ENCODE measurements at regions of chr1 and their contacts with region 1.

Region 1: DNA sequence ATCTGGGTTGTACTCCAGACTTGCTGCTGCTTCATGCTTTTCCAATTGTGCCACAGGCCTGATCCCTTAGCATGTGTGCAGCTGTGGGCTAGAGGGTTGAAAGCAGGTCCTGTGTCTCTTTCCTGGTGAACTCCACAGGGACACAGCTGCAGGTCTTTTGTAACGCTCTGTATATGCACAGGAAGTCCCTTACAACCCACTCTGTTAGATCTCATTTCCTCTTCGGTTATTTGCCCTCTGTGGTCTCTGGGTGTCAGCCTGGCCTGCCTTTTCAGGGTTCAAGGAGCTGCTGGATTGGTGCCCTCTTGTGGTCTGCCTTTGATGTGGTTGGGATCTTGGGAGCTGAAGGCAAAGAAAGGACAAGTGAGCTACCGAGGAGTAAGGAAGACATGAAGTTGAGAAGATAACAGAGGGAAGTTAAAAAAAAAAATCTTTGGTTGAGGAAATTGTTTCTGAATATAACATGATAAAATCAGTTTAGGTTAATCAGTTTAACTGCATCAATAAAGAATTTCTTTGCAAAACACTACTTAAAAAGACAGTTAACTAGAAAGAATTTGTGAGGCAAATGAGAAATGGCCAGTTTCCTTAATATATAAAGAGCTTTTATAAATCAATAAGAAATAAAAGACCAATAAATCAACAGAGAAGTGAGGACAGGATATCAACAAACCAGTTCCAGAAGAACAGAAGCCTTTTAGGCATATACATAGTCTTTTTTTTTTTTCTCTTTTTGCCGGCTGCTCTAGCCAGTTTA is 44.1 kb downstream of the UCK2 start:
- DNase-seq: peak in 1 of 2 experiments; percentile 64
- H3K4me3 ChIP-seq: no peak overlapping the region
- H3K27ac ChIP-seq: no peak overlapping the region
- H3K4me1 ChIP-seq: peaks cover 0 to 11% (median 2%) of the 10 kb centered on the region in 4 experiments; a peak in 1 of 7 replicates
- H3K27me3 ChIP-seq: no peaks in the 10 kb centered on the region
- CTCF ChIP-seq: peak; percentile 57 to 75 (median 74)
- EP300 ChIP-seq: no peak
- POLR2A ChIP-seq: no peak
- RAD21 ChIP-seq: peak; percentile 50 to 62

Region 2: DNA sequence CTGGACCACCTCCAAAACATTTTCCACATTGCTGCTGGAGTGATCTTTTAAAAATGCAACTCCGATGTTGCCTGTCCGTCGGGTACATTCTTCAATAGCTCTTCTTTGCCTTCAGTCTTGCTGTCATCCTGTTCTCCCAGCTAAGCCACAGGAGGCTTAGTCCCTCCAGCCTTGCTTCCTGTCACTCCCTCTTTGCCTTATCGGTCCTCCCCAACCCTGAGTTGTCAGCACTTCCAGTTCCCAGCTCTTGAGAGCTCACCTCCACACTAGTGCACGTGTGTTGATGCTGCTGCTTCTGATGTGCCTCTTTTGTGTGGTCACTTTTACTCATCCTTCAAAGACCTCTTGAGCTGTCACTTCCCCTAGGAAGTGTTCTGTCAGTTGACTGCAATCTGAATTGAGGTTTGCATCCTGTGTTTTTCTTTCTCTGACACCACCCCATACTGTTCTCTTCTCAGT is 28.8 kb before region 1 on chr1:
- CTCF ChIA-PET with region 1: interaction called, 11 read pairs
- POLR2A ChIA-PET with region 1: no interaction called
- DNase-seq: no peak
- H3K4me3 ChIP-seq: no peak overlapping the region
- H3K27ac ChIP-seq: no peak overlapping the region
- H3K4me1 ChIP-seq: peaks cover 5 to 35% (median 16%) of the 10 kb centered on the region in 4 experiments
- H3K27me3 ChIP-seq: no peaks in the 10 kb centered on the region
- CTCF ChIP-seq: no peak
- EP300 ChIP-seq: no peak
- POLR2A ChIP-seq: no peak
- RAD21 ChIP-seq: no peak

Region 3: DNA sequence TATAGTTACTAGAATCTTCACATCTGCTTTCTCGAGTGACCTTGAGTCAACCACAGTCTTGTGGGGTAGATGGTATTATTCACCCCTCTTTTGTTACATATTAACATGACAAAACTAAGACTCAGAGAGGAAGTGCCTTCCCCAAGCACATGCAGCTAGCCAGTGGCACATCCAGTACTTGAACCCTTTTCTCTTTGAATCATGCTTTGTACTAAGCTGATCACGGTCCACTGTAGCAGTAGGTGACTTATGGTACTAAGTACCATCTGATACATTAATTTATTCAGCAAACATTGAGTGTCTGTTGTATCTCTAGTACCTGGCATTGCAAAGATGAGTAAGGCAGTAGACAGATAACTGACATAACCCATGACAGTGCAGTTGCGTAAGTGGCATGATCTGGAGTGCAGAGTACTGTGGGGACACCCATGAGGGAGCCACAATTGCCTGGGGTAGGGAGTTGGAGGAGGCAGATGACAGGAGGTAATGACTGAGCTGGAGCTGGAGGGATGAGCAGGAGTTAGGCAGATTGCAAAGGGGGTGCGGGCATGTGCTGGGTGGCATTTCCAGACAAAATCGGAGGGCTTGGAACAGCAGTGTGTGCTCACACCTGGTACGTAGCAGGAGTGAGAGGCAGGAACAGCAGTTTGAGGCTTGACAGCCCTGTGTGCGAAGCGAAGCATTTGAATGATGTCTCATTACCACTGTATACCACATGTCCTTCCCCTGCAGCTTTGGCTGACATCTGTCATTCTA is 14.3 kb before region 1 on chr1:
- CTCF ChIA-PET with region 1: interaction called, 25 read pairs
- POLR2A ChIA-PET with region 1: interaction called, 3 read pairs
- DNase-seq: no peak
- H3K4me3 ChIP-seq: peak overlapping the region in 1 of 4 experiments; percentile 30; a peak in 2 of 8 replicates
- H3K27ac ChIP-seq: no peak overlapping the region
- H3K4me1 ChIP-seq: peaks cover 4 to 32% (median 25%) of the 10 kb centered on the region in 4 experiments
- H3K27me3 ChIP-seq: no peaks in the 10 kb centered on the region
- CTCF ChIP-seq: no peak
- EP300 ChIP-seq: no peak
- POLR2A ChIP-seq: no peak
- RAD21 ChIP-seq: no peak

Region 4: DNA sequence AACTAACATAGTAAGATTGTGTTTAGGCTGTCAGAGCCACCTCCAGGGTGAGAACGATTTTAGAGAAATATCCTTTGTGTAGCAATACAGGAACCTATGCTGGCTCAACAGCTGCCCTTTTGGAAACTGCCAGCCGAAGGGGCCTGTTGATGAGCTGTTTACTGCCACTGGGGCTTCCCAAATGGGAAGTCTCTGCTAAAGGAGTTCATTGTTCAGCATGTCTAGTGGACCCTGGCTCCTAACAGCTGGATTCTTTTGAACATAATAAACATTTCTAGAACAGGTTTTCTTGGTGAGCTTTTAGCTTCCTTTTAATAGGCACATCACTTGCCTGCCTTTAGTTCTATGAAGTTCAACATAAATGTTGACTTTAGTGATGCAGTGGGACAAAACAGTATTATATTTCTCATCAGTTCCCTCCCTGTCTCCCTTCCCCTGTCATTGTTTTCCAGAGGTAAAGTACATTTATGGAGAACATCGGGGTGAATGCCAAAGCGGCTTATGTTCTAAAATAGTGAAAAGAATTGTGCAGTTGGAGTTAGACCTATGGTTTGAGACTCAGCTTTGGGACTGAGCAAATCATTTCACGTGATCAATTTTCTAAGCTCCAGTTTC is 13.3 kb after region 1 on chr1:
- CTCF ChIA-PET with region 1: interaction called, 32 read pairs
- POLR2A ChIA-PET with region 1: interaction called, 7 read pairs
- DNase-seq: no peak
- H3K4me3 ChIP-seq: no peak overlapping the region
- H3K27ac ChIP-seq: no peak overlapping the region
- H3K4me1 ChIP-seq: peaks cover 0 to 13% (median 2%) of the 10 kb centered on the region in 4 experiments; a peak in 2 of 7 replicates
- H3K27me3 ChIP-seq: no peaks in the 10 kb centered on the region
- CTCF ChIP-seq: no peak
- EP300 ChIP-seq: no peak
- POLR2A ChIP-seq: no peak
- RAD21 ChIP-seq: no peak

Region 5: DNA sequence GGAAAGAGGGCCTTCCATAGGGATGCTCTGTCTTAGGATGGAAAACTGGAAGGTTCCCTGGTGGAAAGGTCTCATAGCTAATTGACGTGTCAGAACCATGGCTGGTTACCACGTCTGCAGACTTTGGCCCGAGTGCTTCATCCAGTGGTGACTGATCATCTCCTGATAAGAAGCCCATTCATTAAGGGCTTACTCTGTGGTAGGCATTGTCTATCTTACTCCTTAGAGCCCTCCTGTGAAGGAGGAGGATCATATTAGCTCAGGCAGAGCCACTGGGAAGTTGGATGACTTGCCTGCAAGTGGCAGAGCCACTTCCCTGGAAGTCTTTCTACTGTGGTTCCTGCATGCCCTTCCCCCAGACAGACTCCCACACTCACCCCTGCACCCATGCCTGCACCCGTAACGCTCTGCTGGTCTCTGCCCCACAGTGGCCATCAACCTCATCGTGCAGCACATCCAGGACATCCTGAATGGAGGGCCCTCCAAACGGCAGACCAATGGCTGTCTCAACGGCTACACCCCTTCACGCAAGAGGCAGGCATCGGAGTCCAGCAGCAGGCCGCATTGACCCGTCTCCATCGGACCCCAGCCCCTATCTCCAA is 35.9 kb after region 1 on chr1:
- CTCF ChIA-PET with region 1: no interaction called
- POLR2A ChIA-PET with region 1: no interaction called
- DNase-seq: no peak
- H3K4me3 ChIP-seq: no peak overlapping the region
- H3K27ac ChIP-seq: no peak overlapping the region
- H3K4me1 ChIP-seq: no peaks in the 10 kb centered on the region
- H3K27me3 ChIP-seq: no peaks in the 10 kb centered on the region
- CTCF ChIP-seq: no peak
- EP300 ChIP-seq: no peak
- POLR2A ChIP-seq: no peak
- RAD21 ChIP-seq: no peak

Region 6: GRCh38 chr1:166017395-166017794 is 145.9 kb after region 1 on chr1:
- CTCF ChIA-PET with region 1: no interaction called
- POLR2A ChIA-PET with region 1: no interaction called
- DNase-seq: peak in 1 of 2 experiments; percentile 66
- H3K4me3 ChIP-seq: no peak overlapping the region
- H3K27ac ChIP-seq: no peak overlapping the region
- H3K4me1 ChIP-seq: no peaks in the 10 kb centered on the region
- H3K27me3 ChIP-seq: no peaks in the 10 kb centered on the region; a peak in 2 of 7 replicates
- CTCF ChIP-seq: peak; percentile 72 to 87 (median 83)
- EP300 ChIP-seq: no peak
- POLR2A ChIP-seq: no peak
- RAD21 ChIP-seq: peak; percentile 61 to 68